Activated CD4-positive, alpha-beta T cell treated with anti-CD3 and anti-CD28 coated beads, Interleukin-2, amount 10 ng/mL, durations not matched to agents 24 days and 14 days (primary cell): ENCODE measurements at regions of chr2 and their contacts with region 1.

Region 1: GRCh38 chr2:105235388-105236054 is 6.0 kb upstream of the GPR45 start:
- DNase-seq: peak; percentile 88
- H3K4me3 Mint-ChIP-seq: no peak overlapping the region
- H3K27ac Mint-ChIP-seq: no peak overlapping the region
- H3K4me1 Mint-ChIP-seq: peaks cover 8% of the 10 kb centered on the region
- H3K27me3 Mint-ChIP-seq: peaks cover 9% of the 10 kb centered on the region

Region 2: GRCh38 chr2:105114551-105114950 is 121.0 kb before region 1 on chr2:
- intact Hi-C with region 1: loop called (anchors 1 kb)
- DNase-seq: no peak
- H3K4me3 Mint-ChIP-seq: no peak overlapping the region
- H3K27ac Mint-ChIP-seq: no peak overlapping the region
- H3K4me1 Mint-ChIP-seq: no peaks in the 10 kb centered on the region
- H3K27me3 Mint-ChIP-seq: no peaks in the 10 kb centered on the region

Region 3: GRCh38 chr2:105398699-105399432 is 163.3 kb after region 1 on chr2 and contains the start of gene FHL2:
- intact Hi-C with region 1: no loop called
- DNase-seq: peak; percentile 93
- H3K4me3 Mint-ChIP-seq: peak within 1 kb of the TSS; percentile 81
- H3K27ac Mint-ChIP-seq: peak within 1 kb of the TSS; percentile 67
- H3K4me1 Mint-ChIP-seq: peaks cover 10% of the 10 kb centered on the region
- H3K27me3 Mint-ChIP-seq: peaks cover 35% of the 10 kb centered on the region
- total RNA-seq, gene FHL2: 2.4 and 3.8 TPM in 2 replicates